Right ventricle myocardium inferior (tissue), 1 donor: ENCODE measurements at regions of chr4 and their contacts with region 1.

Region 1: GRCh38 chr4:140935254-140935653 is 179.1 kb upstream of the TBC1D9 start:
- DNase-seq: no peak
- ATAC-seq: peak; percentile 67

Region 2: DNA sequence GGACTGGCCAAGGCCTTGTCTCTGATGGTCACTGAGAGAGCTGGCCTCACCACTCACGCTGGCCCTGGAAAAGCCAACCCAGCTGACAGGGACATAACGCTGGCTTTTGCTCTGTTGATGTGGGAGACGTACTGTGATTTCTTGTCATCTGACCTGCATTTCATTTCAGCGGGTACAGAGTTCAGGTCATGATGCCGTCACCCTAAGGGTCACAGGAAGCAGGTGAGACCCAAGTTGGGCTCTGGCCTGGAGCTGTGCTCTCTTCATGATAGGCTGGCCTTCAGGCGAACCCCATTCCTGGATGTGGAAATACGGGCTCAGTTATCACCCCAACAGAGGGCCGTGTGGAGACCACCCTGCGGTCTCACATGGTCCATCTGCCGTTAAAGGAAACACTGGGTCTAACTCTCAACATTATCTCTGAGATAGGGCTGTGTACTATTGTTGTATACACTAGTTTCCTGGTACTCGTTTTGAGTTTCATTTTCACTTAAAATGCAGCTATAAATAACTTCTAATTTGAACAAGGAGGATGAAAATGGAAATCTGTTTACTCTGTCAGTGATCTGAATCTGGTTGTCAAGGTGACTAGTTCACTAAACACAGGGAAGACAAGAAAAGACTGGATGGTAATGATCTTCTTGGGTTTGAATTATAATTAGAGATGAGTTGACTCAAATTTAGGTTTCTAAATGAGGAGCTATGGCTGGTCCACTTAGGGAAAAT is 268.2 kb before region 1 on chr4:
- intact Hi-C with region 1: no loop called
- DNase-seq: no peak
- ATAC-seq: no peak

Region 3: GRCh38 chr4:140893939-140894338 is 41.3 kb before region 1 on chr4:
- intact Hi-C with region 1: loop called (anchors 5 kb)
- DNase-seq: no peak
- ATAC-seq: peak; percentile 72

Region 4: DNA sequence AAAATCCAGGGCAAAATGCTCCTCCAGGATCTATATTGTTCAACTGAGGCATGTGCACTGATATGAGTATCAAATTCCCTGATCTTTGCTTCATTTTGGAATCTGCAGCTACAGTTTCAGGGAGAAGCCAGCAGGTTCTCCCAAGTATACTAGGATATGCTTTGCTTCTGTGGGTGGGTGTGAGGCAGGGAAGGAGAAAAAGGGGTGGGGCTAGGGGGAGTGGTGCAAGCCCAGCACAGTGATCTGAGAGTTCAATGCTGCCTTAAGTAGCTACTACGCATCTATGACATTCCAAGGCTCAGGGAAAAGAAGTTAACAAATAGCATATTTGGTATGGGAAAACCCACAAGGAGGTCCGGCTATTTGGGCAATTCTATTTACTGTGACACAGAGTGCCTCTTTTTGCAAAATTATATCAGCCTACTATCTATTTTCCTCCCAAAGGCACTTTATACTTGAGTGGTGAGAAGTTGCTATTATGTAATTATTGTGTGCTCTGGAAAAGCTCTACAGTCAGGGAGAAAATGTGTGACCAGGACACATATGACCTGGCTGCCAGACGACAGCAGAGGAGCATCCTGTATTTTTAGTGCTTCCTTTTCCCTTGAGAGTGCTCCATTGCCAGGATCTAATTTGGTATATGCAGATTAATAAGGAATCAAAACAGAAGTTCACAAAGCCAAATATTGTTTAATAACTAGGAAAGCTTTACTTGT is 36.0 kb after region 1 on chr4:
- intact Hi-C with region 1: no loop called
- DNase-seq: no peak
- ATAC-seq: peak; percentile 78

Region 5: GRCh38 chr4:140993370-140993769 is 58.1 kb after region 1 on chr4:
- intact Hi-C with region 1: loop called (anchors 2 kb)
- DNase-seq: no peak
- ATAC-seq: no peak